Left cardiac atrium (tissue), 4 donors: ENCODE measurements at regions of chr5 and their contacts with region 1.

Region 1: GRCh38 chr5:64595031-64595855 is 89.4 kb downstream of the RGS7BP start:
- DNase-seq: no peak
- ATAC-seq: peak; percentile 63 to 74

Region 2: GRCh38 chr5:64437496-64437895 is 157.7 kb before region 1 on chr5:
- intact Hi-C with region 1: loop called in 1 of 2 experiments (anchors 5 kb)
- DNase-seq: no peak
- ATAC-seq: no peak

Region 3: GRCh38 chr5:64505769-64506566 is 89.3 kb before region 1 on chr5 and contains the start of gene RGS7BP:
- intact Hi-C with region 1: loop called (anchors 10 kb)
- DNase-seq: peak; percentile 48
- ATAC-seq: peak; percentile 90 to 96
- total RNA-seq, gene RGS7BP: 2.0 to 5.1 TPM

Region 4: DNA sequence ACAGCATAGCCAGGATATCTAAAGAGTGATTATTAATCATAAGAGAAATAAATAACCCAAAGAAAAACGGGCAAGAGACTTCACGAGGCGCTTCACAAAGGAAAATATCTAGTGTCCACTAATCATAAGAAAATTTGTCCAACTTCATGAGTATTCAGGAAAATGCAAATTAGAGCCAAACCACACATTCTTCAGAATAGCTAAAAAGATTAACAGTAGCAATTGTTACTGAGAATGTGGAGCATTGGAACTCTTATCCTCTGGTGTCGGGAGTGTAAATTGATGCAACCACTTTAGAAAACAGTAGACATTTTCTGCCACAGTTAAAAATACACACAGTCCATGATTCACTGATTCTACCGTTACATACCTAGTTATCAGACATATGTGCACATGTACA is 319.2 kb after region 1 on chr5:
- intact Hi-C with region 1: no loop called
- DNase-seq: no peak
- ATAC-seq: no peak

Region 5: GRCh38 chr5:65021527-65022226 is 426.4 kb after region 1 on chr5:
- intact Hi-C with region 1: no loop called
- DNase-seq: no peak
- ATAC-seq: peak; percentile 88 to 90